Left cardiac atrium (tissue), 4 donors: ENCODE measurements at regions of chr3 and their contacts with region 1.

Region 1: DNA sequence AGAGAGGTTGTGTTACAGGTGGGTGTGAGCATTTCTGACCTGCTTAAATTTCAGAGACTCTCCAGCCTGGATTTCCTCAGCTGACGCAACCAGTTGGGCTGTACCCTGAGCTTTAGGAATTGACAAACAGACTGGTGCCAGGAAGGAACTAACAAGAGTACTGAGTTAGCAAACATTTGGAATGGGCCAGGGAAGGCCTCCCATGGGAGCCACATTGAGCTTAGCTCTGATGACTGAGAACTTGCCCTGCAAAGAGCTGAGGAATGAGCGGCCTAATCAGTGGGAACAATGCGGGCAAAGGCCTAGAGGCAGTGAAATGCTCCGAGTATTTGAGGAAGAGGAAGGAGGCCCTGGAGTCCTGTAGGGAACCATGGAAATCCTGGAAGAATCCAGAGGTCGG is 254.2 kb downstream of the FEZF2 start:
- DNase-seq: peak; percentile 61
- ATAC-seq: peak in 1 of 2 donors; percentile 85

Region 2: GRCh38 chr3:61947456-61947855 is 171.7 kb before region 1 on chr3:
- intact Hi-C with region 1: loop called in 1 of 2 experiments (anchors 10 kb)
- DNase-seq: no peak
- ATAC-seq: peak in 1 of 2 donors; percentile 63